RWPE1 (cell line): ENCODE measurements at regions of chr18 and their contacts with region 1.

Region 1: DNA sequence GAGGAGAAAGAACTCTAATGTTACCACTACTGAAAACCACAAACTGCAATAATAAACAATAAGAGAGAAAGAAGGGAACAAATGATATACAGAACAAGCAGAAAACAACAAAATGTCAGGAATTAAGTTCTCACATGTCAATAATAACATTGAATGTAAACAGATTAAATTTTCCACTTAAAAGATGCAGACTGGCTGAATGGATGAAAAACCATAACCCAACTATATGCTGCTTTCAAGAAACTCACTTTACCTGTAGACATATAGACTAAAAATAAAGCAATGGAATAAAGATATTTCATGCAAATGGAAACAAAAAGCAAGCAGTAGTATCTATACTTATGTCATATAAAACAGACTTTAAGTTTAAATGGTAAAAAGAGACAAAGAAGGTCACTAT is 50.4 kb downstream of the MRO start:
- DNase-seq: no peak
- H3K27ac ChIP-seq: no peak overlapping the region
- CTCF ChIP-seq: no peak

Region 2: GRCh38 chr18:50674307-50674706 is 95.2 kb before region 1 on chr18:
- CTCF ChIA-PET with region 1: interaction called, 10 read pairs
- POLR2A ChIA-PET with region 1: no interaction called
- DNase-seq: no peak
- H3K27ac ChIP-seq: no peak overlapping the region
- CTCF ChIP-seq: no peak

Region 3: DNA sequence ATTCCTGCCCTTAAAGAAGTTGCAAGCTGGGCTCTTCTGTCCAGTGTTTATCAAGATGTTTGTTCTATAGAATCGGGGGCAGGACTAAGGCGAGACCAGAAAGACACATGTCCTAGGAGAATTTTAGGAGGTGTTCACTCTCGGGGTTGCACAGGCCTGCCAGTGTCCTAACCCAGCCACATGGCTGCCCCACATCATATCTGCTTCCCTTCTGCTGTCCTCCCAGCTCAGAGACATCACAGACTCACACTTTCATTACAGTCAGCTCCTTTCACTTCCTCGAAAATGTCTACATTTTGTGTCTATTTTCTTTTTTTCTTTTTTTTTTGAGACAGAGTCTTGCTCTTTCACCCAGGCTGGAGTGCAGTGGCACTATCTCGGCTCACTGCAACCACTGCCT is 61.1 kb after region 1 on chr18:
- CTCF ChIA-PET with region 1: no interaction called
- POLR2A ChIA-PET with region 1: no interaction called
- DNase-seq: no peak
- H3K27ac ChIP-seq: no peak overlapping the region
- CTCF ChIP-seq: no peak

Region 4: GRCh38 chr18:51070545-51070944 is 301.1 kb after region 1 on chr18:
- CTCF ChIA-PET with region 1: no interaction called
- POLR2A ChIA-PET with region 1: no interaction called
- DNase-seq: peak; percentile 42
- H3K27ac ChIP-seq: no peak overlapping the region
- CTCF ChIP-seq: no peak